ENCODE measurements at regions of chr5 and their contacts with region 1.

Region 1: DNA sequence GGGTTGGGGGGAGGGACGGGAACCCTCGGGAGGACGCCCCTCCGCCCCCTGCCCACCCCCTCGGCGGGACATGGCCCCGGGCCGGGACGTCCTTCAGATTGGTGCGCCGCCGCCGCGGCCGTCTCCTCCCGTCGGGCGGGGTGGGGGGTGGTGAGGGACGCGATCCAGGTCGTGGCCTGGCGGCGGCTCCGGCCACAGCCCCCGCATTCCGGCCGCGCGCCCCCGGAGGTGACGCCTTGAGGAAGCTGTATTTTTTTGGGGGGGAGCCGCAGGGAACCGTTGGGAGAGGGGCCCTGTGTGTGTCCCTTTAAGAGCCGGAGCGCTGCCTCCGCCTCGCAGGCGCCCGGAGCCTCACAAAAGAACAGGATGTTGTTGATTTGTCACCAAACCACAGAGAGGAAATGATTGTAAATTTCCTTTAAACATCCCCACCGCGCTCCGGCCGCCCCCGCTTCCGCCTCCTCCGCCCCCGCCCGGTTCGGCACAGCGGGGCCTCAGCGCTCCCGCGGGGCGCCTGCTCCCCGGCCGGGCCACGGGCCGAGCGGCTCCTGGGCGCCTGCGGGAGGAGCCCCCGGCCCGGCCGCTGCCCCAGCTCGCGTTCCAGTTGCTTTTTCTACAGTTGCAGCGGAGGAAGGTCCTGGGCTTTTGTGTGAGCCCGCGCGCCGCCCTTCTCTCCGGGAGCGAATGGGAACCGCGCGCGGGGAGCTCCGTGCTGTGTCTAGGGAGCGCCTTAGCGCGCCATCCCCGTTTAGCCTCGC is 32.1 kb upstream of the SPRY4 start:
- DNase-seq: peak; percentile 72 to 93 (median 87)
- ATAC-seq: peak; percentile 82
- H3K4me3 ChIP-seq: peak overlapping the region; percentile 53 to 77
- H3K4me3 Mint-ChIP-seq: peak overlapping the region; percentile 86
- H3K27ac ChIP-seq: peak overlapping the region; percentile 40 to 63
- H3K27ac Mint-ChIP-seq: peak overlapping the region; percentile 88
- H3K4me1 ChIP-seq: peaks cover 33% of the 10 kb centered on the region
- H3K4me1 Mint-ChIP-seq: peaks cover 51% of the 10 kb centered on the region
- H3K27me3 ChIP-seq: no peaks in the 10 kb centered on the region
- H3K27me3 Mint-ChIP-seq: no peaks in the 10 kb centered on the region
- CTCF ChIP-seq: no peak

Region 2: GRCh38 chr5:141681695-141682641 is 674.9 kb before region 1 on chr5 and contains the start of gene ARAP3:
- CTCF ChIA-PET with region 1: no interaction called
- POLR2A ChIA-PET with region 1: no interaction called
- intact Hi-C with region 1: loop called in 1 of 2 experiments (anchors 1 kb)
- DNase-seq: peak in 7 of 9 experiments; percentile 30 to 78 (median 49)
- ATAC-seq: peak; percentile 54
- H3K4me3 ChIP-seq: peak within 1 kb of the TSS; percentile 55 to 56
- H3K4me3 Mint-ChIP-seq: peak within 1 kb of the TSS; percentile 76
- H3K27ac ChIP-seq: peak within 1 kb of the TSS in 1 of 2 experiments; percentile 34
- H3K27ac Mint-ChIP-seq: peak within 1 kb of the TSS; percentile 49
- H3K4me1 ChIP-seq: peaks cover 30% of the 10 kb centered on the region
- H3K4me1 Mint-ChIP-seq: peaks cover 28% of the 10 kb centered on the region
- H3K27me3 ChIP-seq: no peaks in the 10 kb centered on the region
- H3K27me3 Mint-ChIP-seq: no peaks in the 10 kb centered on the region
- CTCF ChIP-seq: no peak
- total RNA-seq, gene ARAP3: 0.73 to 1.2 TPM

Region 3: GRCh38 chr5:141835928-141836670 is 520.8 kb before region 1 on chr5:
- CTCF ChIA-PET with region 1: no interaction called
- POLR2A ChIA-PET with region 1: no interaction called
- intact Hi-C with region 1: no loop called
- DNase-seq: no peak
- ATAC-seq: no peak
- H3K4me3 ChIP-seq: no peak overlapping the region
- H3K4me3 Mint-ChIP-seq: no peak overlapping the region
- H3K27ac ChIP-seq: no peak overlapping the region
- H3K27ac Mint-ChIP-seq: no peak overlapping the region
- H3K4me1 ChIP-seq: peaks cover 16% of the 10 kb centered on the region
- H3K4me1 Mint-ChIP-seq: peaks cover 18% of the 10 kb centered on the region
- H3K27me3 ChIP-seq: no peaks in the 10 kb centered on the region
- H3K27me3 Mint-ChIP-seq: peaks cover 5% of the 10 kb centered on the region
- CTCF ChIP-seq: no peak

Region 4: GRCh38 chr5:142063878-142064331 is 293.0 kb before region 1 on chr5:
- CTCF ChIA-PET with region 1: no interaction called
- POLR2A ChIA-PET with region 1: no interaction called
- intact Hi-C with region 1: no loop called
- DNase-seq: peak in 8 of 9 experiments; percentile 11 to 66 (median 40)
- ATAC-seq: peak; percentile 73
- H3K4me3 ChIP-seq: peak overlapping the region in 1 of 2 experiments; percentile 1
- H3K4me3 Mint-ChIP-seq: peak overlapping the region; percentile 49
- H3K27ac ChIP-seq: no peak overlapping the region
- H3K27ac Mint-ChIP-seq: peak overlapping the region; percentile 63
- H3K4me1 ChIP-seq: peaks cover 13% of the 10 kb centered on the region
- H3K4me1 Mint-ChIP-seq: peaks cover 16% of the 10 kb centered on the region
- H3K27me3 ChIP-seq: no peaks in the 10 kb centered on the region
- H3K27me3 Mint-ChIP-seq: no peaks in the 10 kb centered on the region
- CTCF ChIP-seq: no peak

Region 5: DNA sequence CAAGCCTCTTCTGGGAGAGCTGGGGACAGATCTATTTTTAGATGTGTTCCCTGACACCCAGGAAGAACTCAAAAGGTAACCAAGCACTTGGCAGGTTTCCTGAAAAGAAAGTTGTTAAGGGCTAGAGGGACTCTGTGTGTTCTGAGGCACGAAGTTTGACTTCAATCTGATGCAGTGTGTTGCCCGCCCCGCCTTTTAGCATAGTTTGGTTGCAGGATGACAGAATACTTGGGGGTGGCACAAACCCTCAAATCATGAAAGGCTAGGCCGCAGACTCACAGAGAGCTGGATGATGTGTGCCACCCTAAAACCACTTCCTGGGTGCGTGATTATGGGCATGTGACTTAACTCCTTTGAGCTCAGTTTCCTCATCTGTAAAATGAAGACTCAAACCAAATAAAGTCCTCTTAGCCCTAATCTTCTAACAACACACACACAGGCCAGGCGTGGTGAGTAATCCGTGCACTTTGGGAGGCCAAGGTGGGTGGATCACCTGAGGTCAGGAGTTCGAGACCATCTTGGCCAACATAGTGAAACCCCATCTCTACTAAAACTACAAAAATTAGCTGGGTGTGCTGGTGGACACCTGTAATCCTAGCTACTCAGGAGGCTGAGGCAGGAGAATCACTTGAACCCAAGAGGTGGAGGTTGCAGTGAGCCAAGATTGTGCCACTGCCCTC is 261.1 kb before region 1 on chr5:
- CTCF ChIA-PET with region 1: no interaction called
- POLR2A ChIA-PET with region 1: no interaction called
- intact Hi-C with region 1: loop called in 1 of 2 experiments (anchors 5 kb)
- DNase-seq: peak; percentile 68 to 95 (median 80)
- ATAC-seq: peak; percentile 87
- H3K4me3 ChIP-seq: no peak overlapping the region
- H3K4me3 Mint-ChIP-seq: peak overlapping the region; percentile 56
- H3K27ac ChIP-seq: peak overlapping the region; percentile 62 to 78
- H3K27ac Mint-ChIP-seq: peak overlapping the region; percentile 95
- H3K4me1 ChIP-seq: peaks cover 61% of the 10 kb centered on the region
- H3K4me1 Mint-ChIP-seq: peaks cover 57% of the 10 kb centered on the region
- H3K27me3 ChIP-seq: no peaks in the 10 kb centered on the region
- H3K27me3 Mint-ChIP-seq: no peaks in the 10 kb centered on the region
- CTCF ChIP-seq: no peak

Region 6: GRCh38 chr5:142296914-142297417 is 59.9 kb before region 1 on chr5:
- CTCF ChIA-PET with region 1: no interaction called
- POLR2A ChIA-PET with region 1: no interaction called
- intact Hi-C with region 1: no loop called
- DNase-seq: no peak
- ATAC-seq: no peak
- H3K4me3 ChIP-seq: no peak overlapping the region
- H3K4me3 Mint-ChIP-seq: no peak overlapping the region
- H3K27ac ChIP-seq: no peak overlapping the region
- H3K27ac Mint-ChIP-seq: no peak overlapping the region
- H3K4me1 ChIP-seq: no peaks in the 10 kb centered on the region
- H3K4me1 Mint-ChIP-seq: peaks cover 7% of the 10 kb centered on the region
- H3K27me3 ChIP-seq: no peaks in the 10 kb centered on the region
- H3K27me3 Mint-ChIP-seq: peaks cover 2% of the 10 kb centered on the region
- CTCF ChIP-seq: no peak

Region 7: DNA sequence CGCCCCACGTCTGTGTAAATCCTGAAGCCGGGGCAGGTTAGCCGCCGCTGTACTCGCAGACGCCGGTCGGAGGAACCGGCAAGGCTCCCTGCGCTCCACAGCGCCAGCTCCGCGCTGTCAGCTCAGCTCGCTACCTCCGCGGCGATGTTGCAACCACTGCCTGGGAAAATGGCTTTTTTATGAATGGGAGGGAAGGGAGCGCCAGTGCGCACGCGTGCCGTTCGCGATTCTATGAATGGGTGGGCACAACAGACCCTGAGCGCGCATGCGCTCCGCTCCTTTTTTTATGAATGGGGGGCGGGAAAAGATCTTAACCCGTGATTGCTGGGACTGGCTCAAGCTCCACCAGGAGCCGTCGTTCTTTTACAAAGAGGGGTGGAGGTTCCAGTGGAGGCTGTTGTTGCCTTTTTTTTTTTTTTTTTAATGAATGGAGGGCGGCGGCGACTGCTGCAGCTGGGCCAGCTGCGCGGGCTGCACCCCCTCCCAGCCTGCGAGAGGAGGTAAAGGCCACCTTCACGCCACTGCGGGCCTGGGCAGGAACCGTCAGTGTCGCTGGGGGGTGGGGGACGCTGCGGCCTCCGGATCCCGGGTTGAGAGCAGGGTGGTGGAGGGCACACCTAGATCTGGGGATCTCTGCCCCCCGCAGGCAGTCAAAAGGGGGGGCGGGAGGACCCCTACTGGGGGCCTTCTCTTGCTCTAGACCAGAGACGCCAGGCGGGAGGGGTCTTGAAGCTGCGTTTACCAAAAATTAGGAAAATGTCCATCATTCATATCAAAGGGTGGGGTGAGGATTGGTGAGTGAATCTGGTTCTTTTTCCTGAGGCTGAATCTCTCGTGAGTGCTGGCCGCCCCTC is 31.8 kb before region 1 on chr5 and contains the start of gene SPRY4:
- CTCF ChIA-PET with region 1: interaction called, 4 read pairs
- POLR2A ChIA-PET with region 1: interaction called, 3 read pairs
- intact Hi-C with region 1: loop called (anchors 2 kb)
- DNase-seq: peak; percentile 51 to 90 (median 80)
- ATAC-seq: peak; percentile 79
- H3K4me3 ChIP-seq: peak within 1 kb of the TSS; percentile 51 to 62
- H3K4me3 Mint-ChIP-seq: peak within 1 kb of the TSS; percentile 86
- H3K27ac ChIP-seq: no peak within 1 kb of the TSS
- H3K27ac Mint-ChIP-seq: no peak within 1 kb of the TSS
- H3K4me1 ChIP-seq: peaks cover 34% of the 10 kb centered on the region
- H3K4me1 Mint-ChIP-seq: peaks cover 26% of the 10 kb centered on the region
- H3K27me3 ChIP-seq: peaks cover 19 to 37% of the 10 kb centered on the region in 2 experiments
- H3K27me3 Mint-ChIP-seq: peaks cover 72% of the 10 kb centered on the region
- CTCF ChIP-seq: no peak
- total RNA-seq, gene SPRY4: 0.53 to 1.2 TPM

Region 8: DNA sequence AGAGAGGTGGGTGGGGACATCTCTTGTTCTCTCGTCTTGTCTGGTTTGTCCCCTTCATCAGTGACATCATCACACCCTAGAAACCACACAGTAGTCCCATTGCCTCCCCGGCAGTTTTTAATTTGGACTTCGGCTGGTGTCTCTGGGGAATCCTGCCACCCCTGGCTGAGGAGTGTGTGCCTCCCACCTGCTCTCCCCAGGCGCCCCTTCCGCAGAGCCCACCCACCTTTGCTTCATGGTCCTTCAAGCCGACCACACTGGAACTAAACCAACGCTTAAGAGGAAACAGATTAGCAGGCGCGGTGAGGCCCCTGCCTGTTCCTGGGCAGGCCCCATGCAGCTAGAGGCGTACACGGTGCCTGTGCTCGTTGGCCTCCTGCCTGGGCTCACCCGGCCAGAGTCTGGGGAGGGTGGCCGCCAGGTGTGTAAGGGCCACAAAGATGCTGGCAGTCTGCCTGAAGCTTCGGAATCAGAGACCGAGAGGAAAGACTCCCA is 75.5 kb after region 1 on chr5:
- CTCF ChIA-PET with region 1: no interaction called
- POLR2A ChIA-PET with region 1: interaction called, 4 read pairs
- intact Hi-C with region 1: loop called (anchors 1 to 5 kb)
- DNase-seq: peak in 7 of 9 experiments; percentile 16 to 73 (median 48)
- ATAC-seq: peak; percentile 50
- H3K4me3 ChIP-seq: peak overlapping the region in 1 of 2 experiments; percentile 7
- H3K4me3 Mint-ChIP-seq: peak overlapping the region; percentile 60
- H3K27ac ChIP-seq: peak overlapping the region in 1 of 2 experiments; percentile 60
- H3K27ac Mint-ChIP-seq: peak overlapping the region; percentile 87
- H3K4me1 ChIP-seq: peaks cover 20% of the 10 kb centered on the region
- H3K4me1 Mint-ChIP-seq: peaks cover 32% of the 10 kb centered on the region
- H3K27me3 ChIP-seq: no peaks in the 10 kb centered on the region
- H3K27me3 Mint-ChIP-seq: no peaks in the 10 kb centered on the region
- CTCF ChIP-seq: no peak

Region 9: GRCh38 chr5:142561029-142561428 is 204.1 kb after region 1 on chr5:
- CTCF ChIA-PET with region 1: no interaction called
- POLR2A ChIA-PET with region 1: no interaction called
- intact Hi-C with region 1: no loop called
- DNase-seq: no peak
- ATAC-seq: no peak
- H3K4me3 ChIP-seq: no peak overlapping the region
- H3K4me3 Mint-ChIP-seq: no peak overlapping the region
- H3K27ac ChIP-seq: no peak overlapping the region
- H3K27ac Mint-ChIP-seq: no peak overlapping the region
- H3K4me1 ChIP-seq: no peaks in the 10 kb centered on the region
- H3K4me1 Mint-ChIP-seq: no peaks in the 10 kb centered on the region
- H3K27me3 ChIP-seq: no peaks in the 10 kb centered on the region
- H3K27me3 Mint-ChIP-seq: peaks cover 14% of the 10 kb centered on the region
- CTCF ChIP-seq: no peak